ENCODE measurements at regions of chr1 and their contacts with region 1.

Region 1: GRCh38 chr1:209576798-209577197 is 6.7 kb upstream of the CAMK1G start:
- DNase-seq: peak; percentile 76
- CTCF ChIP-seq: peak; percentile 97

Region 2: DNA sequence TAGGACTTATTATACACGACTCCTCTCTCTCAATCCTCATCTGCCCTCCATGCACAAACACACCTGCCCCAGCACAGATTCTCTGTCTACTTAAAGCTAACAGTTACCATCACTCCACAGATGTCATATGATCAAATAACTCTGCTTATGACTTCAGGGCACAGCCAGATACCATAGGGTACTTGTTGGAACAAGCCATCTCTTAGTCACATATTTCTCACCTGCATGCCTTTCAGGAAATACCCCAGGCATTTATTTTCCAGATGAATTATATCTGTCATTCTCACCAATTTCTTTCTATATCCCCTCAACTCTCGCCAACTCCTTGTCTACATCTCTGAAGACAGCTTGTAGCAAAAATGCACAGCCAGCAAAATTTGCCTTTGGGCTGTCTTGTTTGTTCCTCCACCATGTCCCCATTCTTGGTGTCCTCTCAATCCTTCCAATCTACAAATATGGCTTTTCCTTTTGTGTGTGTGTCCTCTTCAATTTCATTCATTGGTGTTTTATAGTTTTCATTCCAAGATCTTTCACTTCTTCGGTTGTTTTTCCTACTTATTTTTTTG is 347.2 kb before region 1 on chr1:
- in situ Hi-C with region 1: no loop called
- DNase-seq: no peak
- CTCF ChIP-seq: no peak

Region 3: GRCh38 chr1:209435654-209436566 is 140.9 kb before region 1 on chr1:
- in situ Hi-C with region 1: no loop called
- DNase-seq: peak; percentile 54
- CTCF ChIP-seq: peak; percentile 47

Region 4: GRCh38 chr1:209627732-209628196 is 51.0 kb after region 1 on chr1:
- in situ Hi-C with region 1: loop called (anchors 10 kb)
- DNase-seq: peak; percentile 90
- CTCF ChIP-seq: peak; percentile 98

Region 5: GRCh38 chr1:209692745-209693504 is 116.1 kb after region 1 on chr1:
- in situ Hi-C with region 1: loop called (anchors 10 kb)
- DNase-seq: peak; percentile 61
- CTCF ChIP-seq: peak; percentile 74

Region 6: DNA sequence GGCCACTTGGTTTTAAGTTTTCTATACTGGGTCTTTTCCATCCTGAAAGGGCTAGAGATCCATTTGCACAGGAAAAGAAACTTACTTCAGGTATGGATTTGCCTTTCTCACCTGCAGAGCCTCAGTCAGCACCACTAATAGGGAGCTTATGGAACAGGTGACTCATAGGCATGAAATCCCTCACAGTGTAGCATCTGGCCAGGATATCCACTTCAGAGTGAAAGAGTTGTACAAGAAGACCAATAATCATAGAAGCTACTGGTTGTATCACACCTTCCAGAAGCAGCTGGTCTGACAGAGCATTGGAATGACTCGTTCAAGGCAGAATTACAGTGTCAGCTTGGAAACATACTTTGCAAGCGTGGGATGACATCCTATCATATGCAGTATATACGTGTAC is 334.9 kb after region 1 on chr1:
- in situ Hi-C with region 1: no loop called
- DNase-seq: no peak
- CTCF ChIP-seq: no peak